Ovary (tissue), 10 donors: ENCODE measurements at regions of chr10 and their contacts with region 1.

Region 1: GRCh38 chr10:24518981-24519597 is 204.6 kb downstream of the ARHGAP21 start:
- DNase-seq: peak; percentile 56 to 77 (median 59)
- H3K4me3 ChIP-seq: no peak overlapping the region
- H3K27ac ChIP-seq: no peak overlapping the region
- H3K4me1 ChIP-seq: peaks cover 1% of the 10 kb centered on the region
- H3K27me3 ChIP-seq: no peaks in the 10 kb centered on the region
- CTCF ChIP-seq: peak; percentile 67 to 82 (median 71)
- EP300 ChIP-seq: no peak
- POLR2A ChIP-seq: no peak

Region 2: DNA sequence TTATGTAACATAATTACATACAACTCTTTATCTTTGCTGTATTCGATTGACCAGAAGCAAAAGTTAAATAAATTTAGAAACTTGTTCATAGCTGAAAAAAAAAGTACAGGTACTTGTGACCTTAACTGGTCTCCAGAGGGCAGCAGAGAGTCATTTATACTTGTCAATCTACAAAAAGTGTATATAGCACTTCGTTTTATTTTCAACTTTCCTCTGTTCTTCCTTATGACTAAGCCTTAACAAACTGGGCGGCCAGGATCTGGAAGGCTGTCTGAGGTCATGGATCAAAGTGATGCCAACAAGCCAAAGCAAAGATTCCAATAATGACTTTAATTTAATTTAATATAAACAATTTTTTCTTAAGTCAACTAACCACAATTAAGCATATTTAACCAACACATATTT is 1204.3 kb before region 1 on chr10:
- intact Hi-C with region 1: loop called in 2 of 4 experiments (anchors 10 kb)
- DNase-seq: peak in 3 of 5 donors; percentile 16 to 50 (median 37)
- H3K4me3 ChIP-seq: no peak overlapping the region
- H3K27ac ChIP-seq: no peak overlapping the region
- H3K4me1 ChIP-seq: peaks cover 2% of the 10 kb centered on the region
- H3K27me3 ChIP-seq: no peaks in the 10 kb centered on the region
- CTCF ChIP-seq: peak; percentile 47 to 62 (median 47)
- EP300 ChIP-seq: no peak
- POLR2A ChIP-seq: no peak

Region 3: GRCh38 chr10:23994479-23995046 is 524.5 kb before region 1 on chr10:
- intact Hi-C with region 1: loop called (anchors 1 to 10 kb)
- DNase-seq: peak; percentile 36 to 66 (median 59)
- H3K4me3 ChIP-seq: no peak overlapping the region
- H3K27ac ChIP-seq: no peak overlapping the region
- H3K4me1 ChIP-seq: no peaks in the 10 kb centered on the region
- H3K27me3 ChIP-seq: no peaks in the 10 kb centered on the region
- CTCF ChIP-seq: peak in 2 of 3 donors; percentile 65 to 88
- EP300 ChIP-seq: no peak
- POLR2A ChIP-seq: no peak

Region 4: DNA sequence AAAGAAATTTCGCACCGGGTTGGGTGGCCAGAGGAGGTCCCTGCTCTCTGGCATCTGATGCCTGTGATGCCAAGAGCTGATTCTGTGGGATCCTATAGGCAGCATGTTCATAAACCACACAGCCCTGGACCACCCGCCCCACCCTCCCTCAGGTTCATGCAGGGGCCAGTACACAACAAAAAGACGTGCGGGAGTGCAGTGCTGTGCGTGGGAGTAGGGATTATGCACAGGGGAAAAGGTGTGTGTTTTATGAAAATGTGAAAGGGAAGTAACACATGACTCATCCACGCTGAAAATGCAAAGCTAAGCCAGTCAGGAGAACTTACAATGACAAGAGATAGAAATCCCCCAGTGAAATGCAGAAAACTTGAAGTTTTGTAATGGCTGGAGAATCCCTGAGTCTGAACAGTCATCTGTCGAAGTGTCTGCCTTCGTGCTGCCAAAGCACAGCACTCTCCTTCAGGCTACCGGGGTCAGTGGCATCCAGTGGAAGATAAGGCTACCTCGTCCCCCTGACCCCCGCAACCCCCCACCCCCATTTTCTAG is 309.1 kb before region 1 on chr10:
- intact Hi-C with region 1: loop called in 2 of 4 experiments (anchors 10 kb)
- DNase-seq: peak in 4 of 5 donors; percentile 26 to 49 (median 30)
- H3K4me3 ChIP-seq: peak overlapping the region; percentile 50
- H3K27ac ChIP-seq: peak overlapping the region in 1 of 2 donors; percentile 90
- H3K4me1 ChIP-seq: no peaks in the 10 kb centered on the region
- H3K27me3 ChIP-seq: no peaks in the 10 kb centered on the region
- CTCF ChIP-seq: no peak
- EP300 ChIP-seq: no peak
- POLR2A ChIP-seq: no peak

Region 5: DNA sequence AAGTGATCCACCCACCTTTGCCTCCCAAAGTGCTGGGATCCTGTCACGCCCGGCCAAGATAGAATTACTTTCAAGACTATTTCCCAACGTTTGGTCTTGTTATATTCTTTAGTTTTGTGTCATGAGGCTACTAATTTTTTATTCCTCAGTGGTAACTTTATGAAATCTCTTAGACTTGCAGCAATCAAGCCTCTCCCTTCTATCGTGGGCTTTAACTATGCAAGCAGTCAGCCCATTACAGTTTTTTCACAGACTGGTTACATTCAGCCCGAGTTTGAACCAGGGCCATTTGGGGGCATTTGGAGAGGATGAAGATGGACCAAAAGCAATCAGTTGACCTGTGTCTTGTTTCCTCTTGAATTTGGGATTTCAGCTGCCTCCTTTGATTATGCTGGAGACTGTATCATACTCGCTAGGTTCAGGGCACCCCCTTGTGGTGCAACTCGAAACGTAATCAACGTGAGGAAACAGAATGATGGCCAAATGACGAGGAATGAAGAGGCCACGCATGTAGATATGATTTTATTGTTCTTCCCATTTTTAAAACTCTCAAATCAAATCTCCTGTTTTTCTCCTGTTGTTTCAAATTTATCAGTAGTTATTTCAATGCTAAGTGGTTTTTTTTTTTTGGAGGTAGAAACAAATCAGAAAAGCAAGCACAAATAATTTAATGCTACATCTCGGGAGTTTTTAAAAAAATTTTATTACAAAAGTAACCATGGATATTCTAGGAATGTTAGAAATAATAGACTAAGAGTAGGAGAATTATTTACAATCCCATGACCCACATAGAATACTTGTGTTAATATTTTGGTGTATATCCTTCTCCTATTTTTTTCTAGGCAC is 158.6 kb before region 1 on chr10:
- intact Hi-C with region 1: loop called in 1 of 4 experiments (anchors 10 kb)
- DNase-seq: peak; percentile 69 to 84 (median 81)
- H3K4me3 ChIP-seq: no peak overlapping the region
- H3K27ac ChIP-seq: no peak overlapping the region
- H3K4me1 ChIP-seq: no peaks in the 10 kb centered on the region
- H3K27me3 ChIP-seq: no peaks in the 10 kb centered on the region
- CTCF ChIP-seq: peak; percentile 53 to 60 (median 57)
- EP300 ChIP-seq: no peak
- POLR2A ChIP-seq: no peak

Region 6: DNA sequence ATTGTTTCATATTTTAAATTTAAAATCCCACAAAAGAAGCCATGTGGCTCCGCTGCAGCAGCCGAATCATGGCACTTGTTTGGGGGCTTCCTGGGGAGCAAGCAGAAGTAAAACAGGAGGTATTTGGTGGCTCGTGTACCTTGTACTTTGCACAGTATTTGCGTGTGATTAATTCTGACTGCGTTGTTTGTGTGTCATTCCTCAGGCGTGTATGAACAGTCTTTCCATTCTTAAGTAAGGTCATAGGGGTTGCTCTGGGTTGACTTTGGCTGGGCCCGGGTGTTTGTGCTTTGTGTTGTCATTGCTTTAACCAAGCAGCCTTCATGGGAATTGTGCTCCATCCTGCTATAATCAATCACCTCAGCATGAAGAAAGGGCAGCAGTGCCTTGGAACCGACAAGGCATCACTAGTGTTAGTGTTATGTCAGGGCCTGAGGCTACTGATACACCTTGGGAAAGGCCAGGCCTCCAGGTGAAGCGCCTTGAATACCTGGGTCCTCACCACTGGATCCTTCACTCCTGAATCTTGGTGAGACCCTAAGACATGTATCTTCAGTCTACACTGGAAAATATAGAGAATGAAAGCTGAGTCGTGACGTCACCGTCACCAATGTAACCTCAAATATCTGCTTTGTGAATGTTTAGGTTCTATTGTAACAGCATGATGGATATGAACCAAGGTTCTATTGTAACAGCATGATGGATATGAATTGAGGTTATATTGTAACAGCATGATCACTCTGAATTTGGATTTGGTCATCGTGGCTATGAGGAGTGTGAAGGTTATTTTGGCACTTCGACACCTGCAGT is 22.4 kb after region 1 on chr10:
- intact Hi-C with region 1: no loop called
- DNase-seq: no peak
- H3K4me3 ChIP-seq: no peak overlapping the region
- H3K27ac ChIP-seq: no peak overlapping the region
- H3K4me1 ChIP-seq: no peaks in the 10 kb centered on the region
- H3K27me3 ChIP-seq: no peaks in the 10 kb centered on the region
- CTCF ChIP-seq: no peak
- EP300 ChIP-seq: no peak
- POLR2A ChIP-seq: no peak